ENCODE measurements at regions of chr7 and their contacts with region 1.

Region 1: GRCh38 chr7:50632561-50633413 is 67.6 kb upstream of the DDC start:
- DNase-seq: peak; percentile 50 to 75 (median 51)
- H3K4me3 ChIP-seq: no peak overlapping the region
- H3K4me3 Mint-ChIP-seq: no peak overlapping the region
- H3K27ac ChIP-seq: no peak overlapping the region
- H3K27ac Mint-ChIP-seq: peak overlapping the region in 1 of 8 donors; percentile 68
- H3K4me1 ChIP-seq: no peaks in the 10 kb centered on the region
- H3K4me1 Mint-ChIP-seq: peaks cover 0 to 5% (median 3%) of the 10 kb centered on the region in 3 donors
- H3K27me3 ChIP-seq: no peaks in the 10 kb centered on the region
- H3K27me3 Mint-ChIP-seq: peaks cover 9 to 37% of the 10 kb centered on the region in 2 donors

Region 2: GRCh38 chr7:50092579-50093491 is 540.0 kb before region 1 on chr7 and contains the start of gene ZPBP:
- CTCF ChIA-PET with region 1: interaction called, 11 read pairs
- POLR2A ChIA-PET with region 1: interaction called, 3 read pairs
- DNase-seq: peak in 4 of 5 donors; percentile 25 to 66 (median 60)
- H3K4me3 ChIP-seq: peak within 1 kb of the TSS; percentile 54
- H3K4me3 Mint-ChIP-seq: peak within 1 kb of the TSS; percentile 85 to 94 (median 90)
- H3K27ac ChIP-seq: no peak within 1 kb of the TSS
- H3K27ac Mint-ChIP-seq: peak within 1 kb of the TSS in 6 of 8 donors; percentile 24 to 85 (median 82)
- H3K4me1 ChIP-seq: no peaks in the 10 kb centered on the region
- H3K4me1 Mint-ChIP-seq: peaks cover 6 to 13% (median 7%) of the 10 kb centered on the region in 3 donors
- H3K27me3 ChIP-seq: no peaks in the 10 kb centered on the region
- H3K27me3 Mint-ChIP-seq: peaks cover 0 to under 1% of the 10 kb centered on the region in 2 donors
- total RNA-seq, gene ZPBP: 0.22 TPM in 1 of 2 experiments, not detected in the other

Region 3: GRCh38 chr7:50467817-50468610 is 164.8 kb before region 1 on chr7:
- CTCF ChIA-PET with region 1: interaction called, 14 read pairs
- POLR2A ChIA-PET with region 1: no interaction called
- DNase-seq: peak; percentile 63 to 82 (median 65)
- H3K4me3 ChIP-seq: peak overlapping the region; percentile 15
- H3K4me3 Mint-ChIP-seq: peak overlapping the region in 6 of 7 donors; percentile 16 to 84 (median 67)
- H3K27ac ChIP-seq: no peak overlapping the region
- H3K27ac Mint-ChIP-seq: peak overlapping the region in 2 of 8 donors; percentile 70 to 95
- H3K4me1 ChIP-seq: peaks cover 5% of the 10 kb centered on the region
- H3K4me1 Mint-ChIP-seq: peaks cover 6 to 12% (median 11%) of the 10 kb centered on the region in 3 donors
- H3K27me3 ChIP-seq: no peaks in the 10 kb centered on the region
- H3K27me3 Mint-ChIP-seq: peaks cover 0 to 7% of the 10 kb centered on the region in 2 donors

Region 4: DNA sequence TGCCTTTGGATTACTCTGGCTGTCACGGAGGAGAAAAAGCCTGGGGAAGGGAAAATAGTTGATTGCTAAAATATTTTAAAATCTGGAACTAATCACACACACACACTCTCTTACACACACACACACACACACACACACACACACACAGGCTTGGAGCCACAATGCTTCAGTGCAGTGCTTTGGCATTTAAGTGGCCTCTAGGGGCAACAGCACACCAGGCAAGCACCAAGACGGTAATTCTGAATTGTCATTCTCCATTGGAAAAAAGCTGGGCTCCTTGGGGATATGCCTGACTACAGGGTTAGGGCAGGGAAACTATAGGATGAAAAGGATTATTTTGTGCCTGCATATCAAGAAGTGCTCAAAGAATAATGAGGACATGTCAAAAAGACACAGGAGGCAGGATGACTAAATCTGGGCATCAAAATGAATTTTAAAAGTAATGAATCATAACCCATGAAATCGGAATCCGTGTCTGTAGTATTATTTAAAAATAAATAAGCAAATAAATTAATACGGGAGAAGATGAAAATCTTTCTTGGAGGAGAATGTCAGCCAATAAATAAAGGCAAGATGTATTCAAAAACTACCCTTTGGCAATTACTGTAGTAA is 37.2 kb before region 1 on chr7:
- CTCF ChIA-PET with region 1: interaction called, 12 read pairs
- POLR2A ChIA-PET with region 1: no interaction called
- DNase-seq: peak in 1 of 5 donors; percentile 7
- H3K4me3 ChIP-seq: no peak overlapping the region
- H3K4me3 Mint-ChIP-seq: peak overlapping the region in 1 of 7 donors; percentile 32
- H3K27ac ChIP-seq: no peak overlapping the region
- H3K27ac Mint-ChIP-seq: no peak overlapping the region
- H3K4me1 ChIP-seq: no peaks in the 10 kb centered on the region
- H3K4me1 Mint-ChIP-seq: peaks cover 10 to 23% (median 21%) of the 10 kb centered on the region in 3 donors
- H3K27me3 ChIP-seq: no peaks in the 10 kb centered on the region
- H3K27me3 Mint-ChIP-seq: peaks cover 2 to 21% of the 10 kb centered on the region in 2 donors

Region 5: GRCh38 chr7:50610521-50611277 is 22.1 kb before region 1 on chr7:
- CTCF ChIA-PET with region 1: interaction called, 27 read pairs
- POLR2A ChIA-PET with region 1: interaction called, 4 read pairs
- DNase-seq: peak; percentile 22 to 77 (median 40)
- H3K4me3 ChIP-seq: peak overlapping the region; percentile 20
- H3K4me3 Mint-ChIP-seq: peak overlapping the region; percentile 6 to 79 (median 53)
- H3K27ac ChIP-seq: peak overlapping the region; percentile 29
- H3K27ac Mint-ChIP-seq: peak overlapping the region; percentile 6 to 79 (median 66)
- H3K4me1 ChIP-seq: peaks cover 30% of the 10 kb centered on the region
- H3K4me1 Mint-ChIP-seq: peaks cover 45 to 66% (median 56%) of the 10 kb centered on the region in 3 donors
- H3K27me3 ChIP-seq: no peaks in the 10 kb centered on the region
- H3K27me3 Mint-ChIP-seq: no peaks in the 10 kb centered on the region

Region 6: GRCh38 chr7:50679218-50680007 is 46.6 kb after region 1 on chr7:
- CTCF ChIA-PET with region 1: interaction called, 14 read pairs
- POLR2A ChIA-PET with region 1: no interaction called
- DNase-seq: peak in 2 of 5 donors; percentile 50 to 54
- H3K4me3 ChIP-seq: no peak overlapping the region
- H3K4me3 Mint-ChIP-seq: no peak overlapping the region
- H3K27ac ChIP-seq: no peak overlapping the region
- H3K27ac Mint-ChIP-seq: no peak overlapping the region
- H3K4me1 ChIP-seq: no peaks in the 10 kb centered on the region
- H3K4me1 Mint-ChIP-seq: peaks cover 0 to 3% (median 3%) of the 10 kb centered on the region in 3 donors
- H3K27me3 ChIP-seq: no peaks in the 10 kb centered on the region
- H3K27me3 Mint-ChIP-seq: peaks cover 6 to 27% of the 10 kb centered on the region in 2 donors

Measured in CD8-positive, alpha-beta memory T cell (primary cell).